ENCODE measurements at regions of chr18 and their contacts with region 1.

Region 1: GRCh38 chr18:60684843-60685513 is 312.4 kb upstream of the MC4R start:
- DNase-seq: no peak
- H3K4me3 ChIP-seq: no peak overlapping the region
- H3K27ac ChIP-seq: no peak overlapping the region
- H3K4me1 ChIP-seq: no peaks in the 10 kb centered on the region
- H3K27me3 ChIP-seq: peaks cover 0 to 5% (median 3%) of the 10 kb centered on the region in 3 donors
- CTCF ChIP-seq: peak in 1 of 4 experiments; percentile 15
- EP300 ChIP-seq: no peak
- POLR2A ChIP-seq: no peak

Region 2: DNA sequence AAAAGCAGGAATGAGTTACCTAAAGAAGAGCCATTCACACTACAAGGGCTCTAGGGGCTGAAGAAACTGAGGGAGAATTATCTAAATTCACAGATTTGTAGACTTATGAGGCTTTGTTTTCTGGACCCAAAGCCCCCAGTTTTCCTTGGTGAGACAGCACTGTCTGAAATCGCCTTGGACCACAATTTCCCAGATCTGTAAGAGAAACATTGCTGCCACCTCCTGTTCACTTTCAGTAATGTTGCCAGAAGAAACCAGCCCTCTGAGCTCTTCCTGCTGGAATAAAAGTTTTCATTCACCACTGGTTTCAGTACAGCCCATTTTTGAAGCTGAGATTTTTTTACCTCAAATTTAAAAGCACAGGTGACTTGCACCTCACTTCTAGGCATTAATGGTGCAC is 817.5 kb after region 1 on chr18:
- intact Hi-C with region 1: loop called (anchors 10 kb)
- DNase-seq: no peak
- H3K4me3 ChIP-seq: no peak overlapping the region
- H3K27ac ChIP-seq: no peak overlapping the region
- H3K4me1 ChIP-seq: no peaks in the 10 kb centered on the region
- H3K27me3 ChIP-seq: no peaks in the 10 kb centered on the region
- CTCF ChIP-seq: peak in 3 of 4 experiments; percentile 28 to 40 (median 37)
- EP300 ChIP-seq: no peak
- POLR2A ChIP-seq: no peak